Mammary epithelial cell (primary cell): ENCODE measurements at regions of chr2 and their contacts with region 1.

Region 1: DNA sequence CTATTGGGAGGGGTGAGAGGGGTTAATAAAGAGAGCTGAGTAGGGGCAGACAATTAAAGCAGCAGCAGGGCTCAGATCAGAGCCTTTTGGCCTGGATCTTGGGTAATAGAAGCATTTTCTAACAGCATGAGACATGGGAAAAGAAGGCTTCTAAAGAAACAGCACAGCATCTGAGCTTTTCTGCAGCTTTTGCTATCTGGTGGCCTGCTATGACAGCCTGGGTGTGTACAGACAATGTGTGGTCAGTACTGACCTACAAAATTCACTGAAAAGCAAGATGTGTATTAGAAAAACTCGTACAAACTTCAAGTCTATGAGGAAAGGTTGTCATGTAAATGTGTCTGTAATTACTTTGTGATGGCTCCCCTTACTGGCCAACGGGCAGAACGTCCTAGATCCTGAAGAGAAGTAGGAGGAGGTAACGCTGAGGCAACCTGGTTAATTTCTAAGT is 95.6 kb downstream of the GALNT3 start:
- DNase-seq: peak; percentile 47
- H3K4me3 ChIP-seq: no peak overlapping the region
- H3K27ac ChIP-seq: no peak overlapping the region
- H3K4me1 ChIP-seq: no peaks in the 10 kb centered on the region
- H3K27me3 ChIP-seq: no peaks in the 10 kb centered on the region
- CTCF ChIP-seq: peak; percentile 60 to 70

Region 2: DNA sequence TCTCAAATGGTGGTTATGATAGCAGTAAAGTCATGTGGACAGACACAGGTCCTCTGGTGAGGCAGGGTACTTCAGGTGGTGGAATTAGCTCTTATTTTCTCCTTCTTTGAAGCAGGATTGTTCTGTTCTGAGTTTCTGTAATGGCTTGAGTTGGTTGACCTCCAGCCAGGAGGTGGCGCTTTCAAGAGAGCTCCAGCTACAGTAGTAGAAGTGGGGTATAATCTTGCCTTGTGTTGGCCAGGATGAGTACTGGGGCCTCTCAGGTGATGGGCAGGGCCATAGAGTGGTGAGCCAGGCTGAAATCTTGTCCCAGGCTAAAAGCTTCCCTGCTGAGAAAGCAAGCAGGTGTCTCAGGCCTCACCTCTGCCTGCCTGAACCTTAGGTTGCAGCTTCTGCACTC is 281.5 kb before region 1 on chr2:
- CTCF ChIA-PET with region 1: no interaction called
- dilution Hi-C with region 1: loop called (anchors 25 kb)
- in situ Hi-C with region 1: loop called in 1 of 2 experiments (anchors 10 kb)
- intact Hi-C with region 1: no loop called
- DNase-seq: no peak
- H3K4me3 ChIP-seq: no peak overlapping the region
- H3K27ac ChIP-seq: no peak overlapping the region
- H3K4me1 ChIP-seq: no peaks in the 10 kb centered on the region
- H3K27me3 ChIP-seq: peaks cover 6% of the 10 kb centered on the region
- CTCF ChIP-seq: no peak

Region 3: DNA sequence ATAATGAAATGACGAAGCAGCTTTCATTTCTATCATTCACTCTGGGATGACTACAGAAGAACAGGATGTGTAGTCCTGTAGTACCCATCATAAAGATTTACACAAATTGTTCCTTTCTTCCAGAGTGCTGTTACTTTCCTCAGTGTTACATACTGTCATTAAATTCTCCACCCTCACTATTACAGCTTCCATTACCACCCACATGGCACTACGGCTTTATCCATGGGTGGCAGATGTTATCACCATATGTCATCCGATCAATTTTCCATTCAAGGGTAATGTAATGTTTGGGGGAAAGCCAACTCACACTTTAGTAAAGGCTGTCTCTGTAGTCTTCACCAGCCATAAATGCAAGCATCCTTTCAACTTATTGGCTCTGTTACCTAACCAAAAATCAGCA is 236.0 kb before region 1 on chr2:
- CTCF ChIA-PET with region 1: no interaction called
- dilution Hi-C with region 1: no loop called
- in situ Hi-C with region 1: no loop called
- intact Hi-C with region 1: no loop called
- DNase-seq: no peak
- H3K4me3 ChIP-seq: no peak overlapping the region
- H3K27ac ChIP-seq: no peak overlapping the region
- H3K4me1 ChIP-seq: no peaks in the 10 kb centered on the region
- H3K27me3 ChIP-seq: no peaks in the 10 kb centered on the region
- CTCF ChIP-seq: no peak

Region 4: GRCh38 chr2:165522719-165523118 is 175.8 kb before region 1 on chr2:
- CTCF ChIA-PET with region 1: no interaction called
- dilution Hi-C with region 1: no loop called
- in situ Hi-C with region 1: no loop called
- intact Hi-C with region 1: no loop called
- DNase-seq: no peak
- H3K4me3 ChIP-seq: no peak overlapping the region
- H3K27ac ChIP-seq: no peak overlapping the region
- H3K4me1 ChIP-seq: no peaks in the 10 kb centered on the region
- H3K27me3 ChIP-seq: no peaks in the 10 kb centered on the region
- CTCF ChIP-seq: no peak

Region 5: DNA sequence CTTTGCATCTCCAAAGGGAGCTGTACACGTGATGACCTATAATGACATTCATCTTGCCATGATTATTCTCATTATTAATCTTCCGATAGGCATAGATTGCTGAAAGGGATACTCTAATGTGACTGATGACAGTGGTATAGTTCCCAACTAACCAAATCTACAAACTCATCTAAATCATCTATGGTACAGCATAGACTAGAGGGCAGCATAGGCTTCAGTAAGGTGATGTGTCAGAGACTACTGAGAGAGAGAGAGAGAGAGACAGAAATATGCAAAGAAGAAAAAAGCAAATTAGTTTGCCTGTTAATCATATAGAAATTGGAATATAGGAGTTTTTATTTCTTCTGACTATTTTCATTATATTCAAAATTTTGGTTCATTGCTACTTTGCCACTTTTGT is 139.6 kb before region 1 on chr2:
- CTCF ChIA-PET with region 1: no interaction called
- dilution Hi-C with region 1: no loop called
- in situ Hi-C with region 1: no loop called
- intact Hi-C with region 1: loop called (anchors 5 kb)
- DNase-seq: no peak
- H3K4me3 ChIP-seq: no peak overlapping the region
- H3K27ac ChIP-seq: no peak overlapping the region
- H3K4me1 ChIP-seq: no peaks in the 10 kb centered on the region
- H3K27me3 ChIP-seq: no peaks in the 10 kb centered on the region
- CTCF ChIP-seq: peak in 1 of 2 donors; percentile 38